Activated CD4-positive, alpha-beta memory T cell treated with anti-CD3 and anti-CD28 coated beads for 36 hours (primary cell): ENCODE measurements at regions of chr6 and their contacts with region 1.

Region 1: GRCh38 chr6:87731818-87732661 is 30.0 kb upstream of the AKIRIN2 start:
- DNase-seq: peak; percentile 65
- H3K4me3 Mint-ChIP-seq: peak overlapping the region; percentile 13
- H3K27ac Mint-ChIP-seq: peak overlapping the region; percentile 24
- H3K4me1 Mint-ChIP-seq: peaks cover 34% of the 10 kb centered on the region
- H3K27me3 Mint-ChIP-seq: no peaks in the 10 kb centered on the region

Region 2: DNA sequence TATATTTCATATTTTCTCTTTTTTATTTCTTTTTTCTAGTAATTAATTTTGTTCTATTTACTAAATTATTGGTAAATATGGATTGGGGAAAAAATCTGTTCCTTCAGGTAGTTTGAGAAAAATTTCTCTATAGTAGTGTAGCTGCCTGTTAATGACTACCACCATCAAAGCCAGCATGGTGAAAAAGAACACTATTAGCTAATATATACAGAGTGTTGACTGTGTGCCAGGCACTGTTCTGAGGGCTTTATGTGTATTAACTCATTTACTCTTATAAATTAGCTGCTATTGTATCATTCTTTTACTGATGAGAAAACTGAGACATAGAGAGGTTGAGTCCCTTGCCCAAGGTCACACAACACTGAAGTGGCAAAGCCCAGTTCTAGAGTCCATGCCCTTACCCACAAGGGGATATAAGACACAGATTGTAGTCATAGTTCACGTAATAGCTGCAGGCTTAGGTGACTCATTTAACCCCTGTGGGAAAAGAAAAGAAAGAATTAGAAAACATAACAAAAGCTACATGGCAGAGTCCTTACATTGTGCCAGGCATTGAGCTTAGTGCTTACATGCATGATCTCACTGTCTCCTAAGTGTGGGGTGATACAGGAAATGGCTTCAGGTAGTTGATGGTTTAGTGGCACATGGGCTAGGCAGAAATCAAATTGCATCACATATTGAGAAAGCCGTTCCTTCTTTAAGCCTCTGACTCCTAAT is 17.8 kb before region 1 on chr6:
- CTCF ChIA-PET with region 1: no interaction called
- POLR2A ChIA-PET with region 1: interaction called, 3 read pairs
- intact Hi-C with region 1: loop called (anchors 1 kb)
- DNase-seq: no peak
- H3K4me3 Mint-ChIP-seq: no peak overlapping the region
- H3K27ac Mint-ChIP-seq: peak overlapping the region; percentile 23
- H3K4me1 Mint-ChIP-seq: peaks cover 9% of the 10 kb centered on the region
- H3K27me3 Mint-ChIP-seq: no peaks in the 10 kb centered on the region

Region 3: DNA sequence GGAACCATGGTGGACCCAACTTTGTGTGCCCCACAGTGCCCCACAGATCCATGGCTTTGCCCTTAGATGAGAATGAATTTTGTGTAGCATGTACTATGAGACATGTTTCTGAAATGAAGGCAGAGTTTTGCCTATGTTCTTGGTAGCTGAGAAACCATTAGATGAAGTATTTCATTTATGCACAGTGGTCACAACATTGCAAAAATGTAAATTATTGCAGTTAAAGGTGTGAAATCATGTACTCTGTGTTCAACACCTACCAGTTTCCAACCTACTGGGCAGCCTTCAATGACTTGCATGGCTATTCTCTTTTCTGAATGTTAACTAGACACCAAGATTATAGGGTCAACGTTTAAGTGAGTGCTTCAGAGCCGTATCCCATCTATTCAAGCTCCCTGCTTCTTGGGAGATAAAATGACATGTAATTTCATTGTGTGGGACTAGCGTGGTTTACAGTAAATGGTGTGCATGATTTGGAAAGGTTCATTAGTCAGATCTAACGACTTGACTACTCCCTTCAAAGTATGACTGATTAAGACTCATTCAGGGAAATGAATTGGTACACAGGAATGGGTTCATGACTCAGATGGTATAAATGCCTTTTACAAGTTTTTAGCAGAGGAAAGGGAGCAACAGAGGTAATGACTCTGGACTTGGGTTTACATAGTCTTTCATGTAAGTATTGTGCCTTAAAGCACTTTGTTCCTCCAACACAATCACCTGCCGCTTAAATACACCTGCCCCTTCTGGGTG is 76.1 kb after region 1 on chr6:
- CTCF ChIA-PET with region 1: no interaction called
- POLR2A ChIA-PET with region 1: no interaction called
- intact Hi-C with region 1: no loop called
- DNase-seq: peak; percentile 17
- H3K4me3 Mint-ChIP-seq: no peak overlapping the region
- H3K27ac Mint-ChIP-seq: peak overlapping the region; percentile 89
- H3K4me1 Mint-ChIP-seq: peaks cover 34% of the 10 kb centered on the region
- H3K27me3 Mint-ChIP-seq: peaks cover 17% of the 10 kb centered on the region

Region 4: DNA sequence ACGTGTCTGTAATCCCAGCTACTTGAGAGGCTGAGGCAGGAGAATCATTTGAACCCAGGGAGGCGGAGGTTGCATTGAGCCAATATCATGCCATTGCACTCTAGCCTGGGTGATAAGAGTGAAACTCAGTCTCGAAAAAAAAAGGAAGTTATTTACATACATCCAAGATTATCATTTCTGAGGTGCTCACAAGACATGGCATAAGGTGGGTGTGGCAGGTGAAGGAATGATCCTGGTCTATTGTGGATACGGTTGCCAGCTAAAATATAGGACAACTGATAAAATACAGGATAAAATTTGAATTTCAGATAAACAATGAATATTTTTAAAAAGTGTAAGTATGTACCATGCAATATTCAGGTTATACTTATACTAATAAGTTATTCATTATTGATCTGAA is 124.4 kb after region 1 on chr6:
- CTCF ChIA-PET with region 1: no interaction called
- POLR2A ChIA-PET with region 1: no interaction called
- intact Hi-C with region 1: no loop called
- DNase-seq: no peak
- H3K4me3 Mint-ChIP-seq: no peak overlapping the region
- H3K27ac Mint-ChIP-seq: no peak overlapping the region
- H3K4me1 Mint-ChIP-seq: peaks cover 2% of the 10 kb centered on the region
- H3K27me3 Mint-ChIP-seq: peaks cover 2% of the 10 kb centered on the region

Region 5: GRCh38 chr6:88403486-88403885 is 671.4 kb after region 1 on chr6:
- CTCF ChIA-PET with region 1: no interaction called
- POLR2A ChIA-PET with region 1: no interaction called
- intact Hi-C with region 1: no loop called
- DNase-seq: no peak
- H3K4me3 Mint-ChIP-seq: no peak overlapping the region
- H3K27ac Mint-ChIP-seq: no peak overlapping the region
- H3K4me1 Mint-ChIP-seq: no peaks in the 10 kb centered on the region
- H3K27me3 Mint-ChIP-seq: peaks cover 2% of the 10 kb centered on the region